OCI-LY7 (cell line): ENCODE measurements at regions of chr9 and their contacts with region 1.

Region 1: DNA sequence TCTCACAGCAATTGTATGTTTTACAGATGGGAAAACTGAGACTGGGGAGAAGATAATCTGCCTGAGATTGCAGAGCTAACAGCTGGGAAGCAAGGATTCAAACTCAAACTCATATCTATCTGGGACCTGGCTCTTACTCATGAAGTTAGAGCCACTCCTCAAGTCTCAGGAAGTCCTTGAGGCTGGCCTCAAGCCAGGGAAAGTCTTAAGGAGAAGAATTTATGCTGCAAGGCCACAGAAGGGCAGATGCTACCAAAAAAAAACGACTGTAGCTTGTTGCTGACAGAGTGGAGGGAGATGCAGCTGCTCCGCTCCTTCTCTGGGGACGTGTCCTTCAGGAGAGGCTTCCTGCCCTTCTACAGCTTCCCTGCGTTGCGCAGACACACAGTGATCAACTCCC is 39.8 kb downstream of the BARHL1 start:
- DNase-seq: no peak
- H3K4me3 ChIP-seq: no peak overlapping the region
- H3K27ac ChIP-seq: no peak overlapping the region
- H3K4me1 ChIP-seq: no peaks in the 10 kb centered on the region
- CTCF ChIP-seq: no peak

Region 2: DNA sequence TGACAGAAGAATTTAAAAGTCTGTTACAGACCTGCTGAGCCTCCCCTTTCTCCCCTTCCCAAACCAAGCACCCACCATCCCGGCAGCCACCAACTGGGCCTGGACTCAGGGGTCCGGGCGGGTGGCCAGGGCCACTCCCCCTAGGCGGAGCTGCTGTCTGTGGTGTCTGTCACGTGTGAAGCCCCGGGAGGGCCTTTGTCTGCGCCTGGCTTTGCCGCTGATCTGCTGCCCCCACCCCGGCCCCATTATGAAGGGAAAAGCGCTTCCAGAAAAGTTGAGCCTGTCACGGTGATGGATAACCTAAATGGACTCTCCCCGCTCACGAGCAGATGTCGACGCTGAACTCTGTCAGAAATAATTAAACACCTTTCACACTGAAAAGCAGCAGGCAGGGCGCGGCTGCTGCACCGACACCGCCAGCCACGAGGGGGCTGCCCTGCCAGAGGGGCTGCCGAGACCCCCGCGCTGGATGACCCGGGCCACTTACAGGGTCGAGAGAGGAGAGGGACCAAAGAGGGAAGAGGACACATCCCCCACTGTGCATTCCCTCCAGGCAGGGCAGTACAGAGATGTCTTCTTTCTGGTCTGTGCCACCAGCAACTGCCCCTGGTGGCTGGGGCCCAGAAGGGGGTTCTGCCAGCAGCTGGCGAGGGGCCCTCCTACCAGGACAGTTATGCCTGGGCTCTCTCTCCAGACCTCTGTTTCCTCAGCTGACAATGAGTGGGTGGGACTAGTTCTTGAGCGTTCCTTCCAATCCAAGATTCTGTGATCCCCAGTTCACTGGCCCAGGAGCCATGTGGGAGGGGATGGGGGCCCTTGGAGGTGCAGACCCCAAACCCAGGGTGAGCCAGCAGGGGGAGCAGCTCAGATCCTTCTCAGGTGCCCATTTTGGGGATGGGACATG is 75.8 kb before region 1 on chr9:
- CTCF ChIA-PET with region 1: no interaction called
- POLR2A ChIA-PET with region 1: interaction called, 10 read pairs
- intact Hi-C with region 1: no loop called
- DNase-seq: peak; percentile 46
- H3K4me3 ChIP-seq: peak overlapping the region; percentile 23
- H3K27ac ChIP-seq: peak overlapping the region; percentile 97
- H3K4me1 ChIP-seq: peaks cover 48% of the 10 kb centered on the region
- CTCF ChIP-seq: peak; percentile 79